Activated naive CD4-positive, alpha-beta T cell treated with anti-CD3 and anti-CD28 coated beads for 36 hours (primary cell): ENCODE measurements at regions of chr6 and their contacts with region 1.

Region 1: GRCh38 chr6:118768904-118769325 is 117.5 kb upstream of the CEP85L start:
- DNase-seq: peak; percentile 69
- H3K4me3 Mint-ChIP-seq: peak overlapping the region; percentile 30
- H3K27ac Mint-ChIP-seq: peak overlapping the region; percentile 77
- H3K4me1 Mint-ChIP-seq: peaks cover 31% of the 10 kb centered on the region
- H3K27me3 Mint-ChIP-seq: no peaks in the 10 kb centered on the region

Region 2: GRCh38 chr6:118651282-118652050 is 117.4 kb before region 1 on chr6 and contains the start of gene CEP85L:
- CTCF ChIA-PET with region 1: no interaction called
- intact Hi-C with region 1: loop called (anchors 2 kb)
- DNase-seq: peak; percentile 90
- H3K4me3 Mint-ChIP-seq: peak within 1 kb of the TSS; percentile 86
- H3K27ac Mint-ChIP-seq: peak within 1 kb of the TSS; percentile 89
- H3K4me1 Mint-ChIP-seq: peaks cover 49% of the 10 kb centered on the region
- H3K27me3 Mint-ChIP-seq: no peaks in the 10 kb centered on the region
- total RNA-seq, gene CEP85L: 31.4 to 31.9 TPM

Region 3: GRCh38 chr6:118755941-118756646 is 12.8 kb before region 1 on chr6:
- CTCF ChIA-PET with region 1: interaction called, 4 read pairs
- intact Hi-C with region 1: loop called (anchors 1 kb)
- DNase-seq: peak; percentile 48
- H3K4me3 Mint-ChIP-seq: peak overlapping the region; percentile 2
- H3K27ac Mint-ChIP-seq: peak overlapping the region; percentile 44
- H3K4me1 Mint-ChIP-seq: peaks cover 33% of the 10 kb centered on the region
- H3K27me3 Mint-ChIP-seq: no peaks in the 10 kb centered on the region